CD4-positive, alpha-beta memory T cell (primary cell): ENCODE measurements at regions of chr12 and their contacts with region 1.

Region 1: DNA sequence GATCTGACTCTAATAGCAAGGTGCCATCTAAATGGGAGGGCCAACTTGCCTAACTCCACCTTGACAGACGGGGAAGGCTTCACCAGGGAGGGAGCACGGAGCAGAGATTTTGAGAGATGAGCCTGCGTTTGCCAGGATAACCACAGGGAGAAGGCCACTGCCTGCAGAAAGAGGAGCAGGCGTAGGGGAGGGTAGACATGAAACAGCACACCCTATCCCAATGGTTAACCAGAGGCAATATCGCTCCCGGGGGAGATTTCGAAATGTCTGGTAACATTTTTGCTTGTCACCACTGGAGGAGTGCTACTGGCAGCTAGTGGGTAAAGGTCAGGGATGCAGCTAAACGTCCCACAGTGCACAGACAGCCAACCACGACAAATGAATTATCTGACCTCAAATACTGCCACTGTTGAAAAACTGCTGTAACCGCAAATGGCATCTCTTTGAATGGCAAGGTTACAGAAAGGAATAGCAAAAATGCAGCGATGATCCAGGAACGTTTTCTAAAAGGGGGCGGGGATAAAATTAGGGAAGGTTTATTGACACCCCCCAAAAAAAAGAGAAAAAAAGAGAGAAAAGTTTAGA is 126.0 kb upstream of the ATF7IP start:
- DNase-seq: peak in 2 of 5 donors; percentile 17 to 50
- H3K4me3 ChIP-seq: peak overlapping the region in 1 of 2 donors; percentile 28
- H3K4me3 Mint-ChIP-seq: peak overlapping the region; percentile 73 to 91 (median 87)
- H3K27ac ChIP-seq: peak overlapping the region; percentile 25
- H3K27ac Mint-ChIP-seq: peak overlapping the region; percentile 44 to 93 (median 90)
- H3K4me1 ChIP-seq: peaks cover 19% of the 10 kb centered on the region
- H3K4me1 Mint-ChIP-seq: peaks cover 13 to 22% (median 18%) of the 10 kb centered on the region in 4 donors
- H3K27me3 ChIP-seq: no peaks in the 10 kb centered on the region
- H3K27me3 Mint-ChIP-seq: no peaks in the 10 kb centered on the region

Region 2: DNA sequence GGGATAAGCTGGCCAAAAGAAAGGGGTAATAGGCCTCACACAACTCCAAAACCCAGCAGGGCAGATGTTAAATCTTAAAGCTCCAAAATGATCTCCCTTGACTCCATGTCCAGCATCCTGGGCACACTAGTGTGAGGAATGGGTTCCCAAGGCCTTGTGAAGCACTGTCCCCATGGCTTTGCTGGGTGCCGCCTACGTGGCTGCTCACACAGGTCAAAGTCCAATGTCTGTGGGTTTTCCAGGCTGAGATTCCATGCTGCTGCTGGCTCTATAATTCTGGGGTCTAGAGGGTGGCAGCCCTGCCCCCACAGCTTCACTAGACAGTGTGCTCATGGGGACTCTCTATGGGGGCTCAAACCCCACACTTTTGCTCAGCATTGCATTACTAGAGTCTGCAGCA is 112.8 kb before region 1 on chr12:
- CTCF ChIA-PET with region 1: no interaction called
- POLR2A ChIA-PET with region 1: no interaction called
- intact Hi-C with region 1: no loop called
- DNase-seq: no peak
- H3K4me3 ChIP-seq: no peak overlapping the region
- H3K4me3 Mint-ChIP-seq: no peak overlapping the region
- H3K27ac ChIP-seq: no peak overlapping the region
- H3K27ac Mint-ChIP-seq: no peak overlapping the region
- H3K4me1 ChIP-seq: no peaks in the 10 kb centered on the region
- H3K4me1 Mint-ChIP-seq: no peaks in the 10 kb centered on the region
- H3K27me3 ChIP-seq: no peaks in the 10 kb centered on the region
- H3K27me3 Mint-ChIP-seq: peaks cover 3% of the 10 kb centered on the region in 2 donors

Region 3: DNA sequence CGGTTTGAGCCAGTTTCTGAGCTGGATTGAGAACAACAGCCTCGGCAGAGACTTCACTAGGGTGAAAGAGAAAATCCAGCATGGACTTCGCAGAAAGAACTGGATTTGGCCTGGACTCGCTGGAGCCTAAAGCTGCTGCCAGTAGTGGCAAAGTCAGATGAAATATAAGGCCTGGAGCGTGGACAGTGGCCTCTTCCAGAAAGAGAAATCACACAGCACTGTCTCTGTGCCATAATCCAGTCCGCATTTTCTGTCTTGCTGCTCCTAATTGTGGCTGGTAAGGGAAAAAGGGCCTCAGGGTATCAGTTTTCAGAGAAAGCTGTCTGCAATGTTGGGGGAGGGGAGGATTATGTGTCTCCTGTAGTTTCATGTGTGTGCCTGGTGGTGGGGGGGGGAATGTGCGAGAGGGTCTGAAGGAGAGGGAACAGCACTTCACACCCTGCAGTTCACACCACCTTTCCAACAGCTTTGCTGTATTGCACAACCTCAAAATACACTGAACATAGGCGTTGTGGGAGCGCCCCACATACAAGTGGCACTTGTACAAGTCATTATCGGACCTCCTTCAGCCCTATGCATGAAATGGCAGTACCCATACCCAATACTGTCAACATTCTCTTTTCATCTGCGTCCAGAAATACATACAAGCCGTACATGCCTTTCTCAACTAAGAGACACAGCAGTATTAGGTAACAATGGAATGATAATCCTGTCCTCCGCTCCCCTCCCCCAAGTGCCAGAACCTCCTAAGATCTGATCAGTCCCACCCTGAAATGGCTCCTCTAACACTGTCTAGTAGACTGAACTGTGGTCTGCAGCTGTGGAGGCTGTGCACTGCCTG is 18.5 kb after region 1 on chr12:
- CTCF ChIA-PET with region 1: interaction called, 57 read pairs
- POLR2A ChIA-PET with region 1: interaction called, 33 read pairs
- intact Hi-C with region 1: loop called (anchors 1 kb)
- DNase-seq: peak; percentile 81 to 92 (median 84)
- H3K4me3 ChIP-seq: peak overlapping the region; percentile 1 to 31
- H3K4me3 Mint-ChIP-seq: peak overlapping the region; percentile 75 to 91 (median 84)
- H3K27ac ChIP-seq: peak overlapping the region; percentile 49
- H3K27ac Mint-ChIP-seq: peak overlapping the region; percentile 95 to 99 (median 98)
- H3K4me1 ChIP-seq: peaks cover 44% of the 10 kb centered on the region
- H3K4me1 Mint-ChIP-seq: peaks cover 35 to 57% (median 42%) of the 10 kb centered on the region in 4 donors
- H3K27me3 ChIP-seq: no peaks in the 10 kb centered on the region
- H3K27me3 Mint-ChIP-seq: no peaks in the 10 kb centered on the region

Region 4: GRCh38 chr12:14384783-14385638 is 145.6 kb after region 1 on chr12:
- CTCF ChIA-PET with region 1: interaction called, 12 read pairs
- POLR2A ChIA-PET with region 1: interaction called, 3 read pairs
- intact Hi-C with region 1: no loop called
- DNase-seq: peak; percentile 81 to 87 (median 86)
- H3K4me3 ChIP-seq: peak overlapping the region in 1 of 2 donors; percentile 41
- H3K4me3 Mint-ChIP-seq: peak overlapping the region; percentile 64 to 92 (median 78)
- H3K27ac ChIP-seq: peak overlapping the region; percentile 74
- H3K27ac Mint-ChIP-seq: peak overlapping the region; percentile 93 to 97 (median 94)
- H3K4me1 ChIP-seq: peaks cover 73% of the 10 kb centered on the region
- H3K4me1 Mint-ChIP-seq: peaks cover 42 to 67% (median 57%) of the 10 kb centered on the region in 4 donors
- H3K27me3 ChIP-seq: no peaks in the 10 kb centered on the region
- H3K27me3 Mint-ChIP-seq: no peaks in the 10 kb centered on the region

Region 5: DNA sequence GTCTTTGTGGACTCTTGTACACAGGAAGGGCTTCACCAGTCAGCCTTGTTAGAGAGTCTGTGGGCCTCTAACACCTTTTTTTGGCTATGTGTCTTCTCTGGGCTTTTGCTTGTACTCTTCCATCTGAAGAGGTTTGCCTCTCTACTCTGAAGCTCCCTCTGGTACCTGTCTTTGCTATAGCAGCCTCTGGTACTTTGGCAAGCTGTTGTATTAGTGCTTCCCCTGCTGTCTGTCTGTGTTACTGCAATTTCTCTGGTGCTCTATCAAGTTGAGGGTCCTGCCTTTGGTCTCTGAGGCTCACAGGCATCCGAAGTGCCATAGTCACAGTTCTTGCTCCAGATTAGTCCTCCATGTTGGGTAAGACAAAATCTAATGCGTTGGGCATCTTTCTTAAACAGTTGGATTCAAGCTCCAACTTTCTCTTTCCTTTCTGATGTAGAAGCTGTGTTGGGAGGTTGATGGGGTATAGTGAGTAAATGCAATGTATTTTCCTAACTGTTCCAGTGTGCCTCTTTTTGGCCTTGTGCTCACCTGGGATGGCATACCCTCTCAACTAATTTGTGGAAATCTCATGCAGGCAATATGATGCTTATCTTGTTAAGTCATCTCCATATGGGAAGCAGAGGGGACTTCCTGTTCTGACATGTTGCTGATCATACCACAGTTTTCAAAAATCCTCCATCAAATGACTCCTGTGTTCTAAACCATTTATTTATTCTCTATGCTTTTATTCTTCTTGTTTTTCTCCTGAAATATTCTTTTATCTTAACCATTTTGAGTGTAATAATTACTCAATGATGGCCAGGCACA is 214.9 kb after region 1 on chr12:
- CTCF ChIA-PET with region 1: interaction called, 44 read pairs
- POLR2A ChIA-PET with region 1: interaction called, 5 read pairs
- intact Hi-C with region 1: loop called (anchors 1 kb)
- DNase-seq: peak in 4 of 5 donors; percentile 22 to 38 (median 27)
- H3K4me3 ChIP-seq: no peak overlapping the region
- H3K4me3 Mint-ChIP-seq: peak overlapping the region in 5 of 8 donors; percentile 38 to 69 (median 46)
- H3K27ac ChIP-seq: no peak overlapping the region
- H3K27ac Mint-ChIP-seq: peak overlapping the region; percentile 66 to 89 (median 75)
- H3K4me1 ChIP-seq: peaks cover 39% of the 10 kb centered on the region
- H3K4me1 Mint-ChIP-seq: peaks cover 41 to 70% (median 49%) of the 10 kb centered on the region in 4 donors
- H3K27me3 ChIP-seq: no peaks in the 10 kb centered on the region
- H3K27me3 Mint-ChIP-seq: no peaks in the 10 kb centered on the region

Region 6: GRCh38 chr12:14618983-14619382 is 379.5 kb after region 1 on chr12:
- CTCF ChIA-PET with region 1: interaction called, 43 read pairs
- POLR2A ChIA-PET with region 1: no interaction called
- intact Hi-C with region 1: loop called (anchors 1 kb)
- DNase-seq: peak in 2 of 5 donors; percentile 16 to 22
- H3K4me3 ChIP-seq: no peak overlapping the region
- H3K4me3 Mint-ChIP-seq: no peak overlapping the region
- H3K27ac ChIP-seq: no peak overlapping the region
- H3K27ac Mint-ChIP-seq: no peak overlapping the region
- H3K4me1 ChIP-seq: no peaks in the 10 kb centered on the region
- H3K4me1 Mint-ChIP-seq: peaks cover 0 to 2% (median 0%) of the 10 kb centered on the region in 4 donors
- H3K27me3 ChIP-seq: no peaks in the 10 kb centered on the region
- H3K27me3 Mint-ChIP-seq: peaks cover 20 to 28% of the 10 kb centered on the region in 2 donors

Region 7: DNA sequence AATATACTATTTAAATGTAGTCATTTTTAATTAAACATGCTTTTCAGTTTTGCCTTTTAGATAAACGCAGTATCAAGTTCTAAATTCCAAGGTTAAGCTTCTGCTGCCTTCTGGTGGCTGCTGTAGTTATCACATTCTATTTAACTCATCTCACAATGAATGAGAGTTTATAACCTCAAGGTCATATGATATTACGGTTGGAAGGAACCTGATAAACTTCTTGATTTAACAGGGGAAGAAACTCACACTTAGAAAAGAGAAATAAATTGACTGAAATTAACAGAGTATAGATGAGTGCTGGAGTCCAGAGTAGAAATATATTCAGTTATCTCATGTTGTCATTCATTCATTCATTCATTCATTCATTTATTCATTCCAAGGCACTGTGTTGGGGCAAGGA is 425.1 kb after region 1 on chr12:
- CTCF ChIA-PET with region 1: interaction called, 35 read pairs
- POLR2A ChIA-PET with region 1: no interaction called
- intact Hi-C with region 1: loop called (anchors 1 kb)
- DNase-seq: peak; percentile 47 to 57 (median 51)
- H3K4me3 ChIP-seq: no peak overlapping the region
- H3K4me3 Mint-ChIP-seq: no peak overlapping the region
- H3K27ac ChIP-seq: no peak overlapping the region
- H3K27ac Mint-ChIP-seq: no peak overlapping the region
- H3K4me1 ChIP-seq: no peaks in the 10 kb centered on the region
- H3K4me1 Mint-ChIP-seq: peaks cover 0 to 5% (median 3%) of the 10 kb centered on the region in 4 donors
- H3K27me3 ChIP-seq: no peaks in the 10 kb centered on the region
- H3K27me3 Mint-ChIP-seq: peaks cover 2 to 4% of the 10 kb centered on the region in 2 donors